ENCODE measurements at regions of chr4 and their contacts with region 1.

Region 1: DNA sequence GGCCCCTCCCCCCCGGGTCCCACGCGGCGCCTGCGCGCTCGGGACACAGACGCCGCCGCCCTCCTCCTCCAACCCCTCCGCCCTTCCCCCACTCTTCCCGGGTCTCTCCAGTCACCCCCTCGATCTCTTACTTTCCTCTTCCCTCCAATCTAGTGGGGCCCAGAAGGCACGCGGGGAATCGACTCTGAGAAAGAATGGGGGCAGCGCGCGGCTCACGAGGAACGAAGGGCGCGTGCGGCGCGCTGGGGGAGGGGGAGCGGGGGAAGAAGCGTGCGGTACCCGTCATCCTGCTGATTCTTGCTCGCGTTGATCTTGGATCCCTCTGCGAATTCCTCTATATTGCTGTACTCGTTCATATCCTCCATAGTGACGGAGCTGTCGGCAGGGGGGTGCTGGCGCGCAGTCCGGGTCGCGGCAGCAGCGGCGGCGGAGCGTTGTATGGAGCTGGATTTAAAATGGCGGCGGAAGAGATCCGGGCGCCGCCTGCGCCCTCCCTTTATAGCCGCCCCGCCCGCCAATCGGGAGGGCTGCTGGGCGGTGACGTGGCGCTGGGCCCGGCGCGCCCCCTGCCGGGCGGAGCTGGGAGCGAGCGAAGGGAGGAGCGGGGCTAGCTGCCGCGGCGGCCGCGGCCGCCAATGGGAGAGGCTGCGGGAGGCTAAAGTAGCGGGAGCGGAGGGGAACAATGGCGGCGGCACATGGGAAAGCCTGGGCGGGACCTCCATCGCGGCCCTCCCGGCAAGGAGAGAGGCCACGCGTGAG is 1.1 kb downstream of the HNRNPDL start:
- DNase-seq: peak; percentile 99
- ATAC-seq: peak; percentile 59
- H3K4me3 Mint-ChIP-seq: peak overlapping the region; percentile 98
- H3K27ac Mint-ChIP-seq: peak overlapping the region; percentile 95
- H3K4me1 Mint-ChIP-seq: peaks cover 55% of the 10 kb centered on the region
- H3K27me3 Mint-ChIP-seq: no peaks in the 10 kb centered on the region

Region 2: GRCh38 chr4:82360298-82361177 is 68.6 kb before region 1 on chr4:
- POLR2A ChIA-PET with region 1: interaction called, 21 read pairs
- DNase-seq: no peak
- ATAC-seq: no peak
- H3K4me3 Mint-ChIP-seq: peak overlapping the region; percentile 4
- H3K27ac Mint-ChIP-seq: peak overlapping the region; percentile 44
- H3K4me1 Mint-ChIP-seq: peaks cover 67% of the 10 kb centered on the region
- H3K27me3 Mint-ChIP-seq: no peaks in the 10 kb centered on the region

Region 3: DNA sequence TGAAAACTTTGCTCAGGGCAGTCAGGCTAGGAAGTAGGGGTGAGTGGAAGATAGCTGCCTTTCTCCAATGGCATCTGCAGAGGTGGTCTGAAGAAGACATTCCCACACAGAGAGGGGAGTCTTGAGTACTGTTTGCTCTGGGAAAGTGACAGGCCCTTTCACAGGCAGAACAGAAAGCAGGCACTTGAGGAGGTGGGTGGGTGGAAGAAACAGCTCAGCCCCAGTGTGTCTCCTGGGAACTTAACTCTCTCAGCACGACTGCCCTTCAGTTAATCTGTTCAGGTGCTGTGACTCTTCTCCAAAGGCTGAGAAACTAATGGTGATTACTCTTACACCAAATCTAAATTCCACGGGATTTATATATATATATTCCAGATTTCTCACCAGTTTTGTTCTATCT is 29.6 kb after region 1 on chr4:
- POLR2A ChIA-PET with region 1: no interaction called
- DNase-seq: no peak
- ATAC-seq: no peak
- H3K4me3 Mint-ChIP-seq: no peak overlapping the region
- H3K27ac Mint-ChIP-seq: no peak overlapping the region
- H3K4me1 Mint-ChIP-seq: no peaks in the 10 kb centered on the region
- H3K27me3 Mint-ChIP-seq: no peaks in the 10 kb centered on the region